WTC11 (cell line): ENCODE measurements at regions of chr2 and their contacts with region 1.

Region 1: DNA sequence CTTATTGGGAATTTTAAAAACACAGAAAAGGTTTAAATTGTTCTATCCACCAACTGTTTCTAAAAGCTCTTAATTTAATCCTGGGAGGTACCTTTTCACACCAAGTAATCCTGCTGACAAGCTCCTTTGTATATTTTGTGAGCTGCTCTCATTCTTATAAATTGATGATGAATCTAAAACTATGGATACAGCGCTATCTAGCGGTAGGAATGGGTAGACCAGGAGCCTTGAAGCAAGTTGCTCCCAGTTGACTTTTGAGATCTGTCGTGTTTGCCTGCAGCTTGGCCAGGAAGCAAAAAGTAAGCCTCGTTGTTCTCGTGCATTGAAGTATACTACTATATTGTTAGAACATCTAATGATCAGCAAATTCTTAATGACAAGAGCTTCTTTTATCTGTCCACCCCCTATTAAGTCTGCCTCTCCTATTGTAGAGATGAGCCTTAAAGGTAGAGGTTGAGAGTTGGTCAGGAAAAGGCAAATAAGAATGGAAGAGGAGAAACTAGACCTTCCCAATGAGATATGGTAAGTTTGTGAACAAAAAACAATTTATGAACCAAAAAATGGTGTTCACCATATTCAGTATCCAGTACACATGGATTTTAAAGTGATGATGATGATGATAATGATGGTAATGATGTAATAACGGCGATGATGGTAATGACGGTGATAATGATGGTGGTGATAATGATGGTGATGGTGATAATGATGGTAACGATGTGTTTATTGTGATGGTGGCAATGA is 212.0 kb upstream of the NCKAP5 start:
- DNase-seq: peak; percentile 64
- ATAC-seq: peak; percentile 74
- H3K4me3 Mint-ChIP-seq: no peak overlapping the region
- H3K27ac Mint-ChIP-seq: no peak overlapping the region
- H3K4me1 Mint-ChIP-seq: no peaks in the 10 kb centered on the region
- H3K27me3 Mint-ChIP-seq: no peaks in the 10 kb centered on the region
- CTCF ChIP-seq: peak; percentile 56

Region 2: GRCh38 chr2:133517876-133518275 is 262.4 kb before region 1 on chr2:
- CTCF ChIA-PET with region 1: interaction called, 46 read pairs
- POLR2A ChIA-PET with region 1: no interaction called
- DNase-seq: no peak
- ATAC-seq: no peak
- H3K4me3 Mint-ChIP-seq: no peak overlapping the region
- H3K27ac Mint-ChIP-seq: no peak overlapping the region
- H3K4me1 Mint-ChIP-seq: peaks cover under 1% of the 10 kb centered on the region
- H3K27me3 Mint-ChIP-seq: peaks cover 33% of the 10 kb centered on the region
- CTCF ChIP-seq: no peak

Region 3: GRCh38 chr2:133568172-133568571 is 212.1 kb before region 1 on chr2 and contains the start of gene NCKAP5:
- CTCF ChIA-PET with region 1: interaction called, 12 read pairs
- POLR2A ChIA-PET with region 1: no interaction called
- DNase-seq: no peak
- ATAC-seq: no peak
- H3K4me3 Mint-ChIP-seq: peak within 1 kb of the TSS; percentile 27; the same call in 1 of the 2 replicates
- H3K27ac Mint-ChIP-seq: no peak within 1 kb of the TSS
- H3K4me1 Mint-ChIP-seq: peaks cover 60% of the 10 kb centered on the region
- H3K27me3 Mint-ChIP-seq: no peaks in the 10 kb centered on the region
- CTCF ChIP-seq: no peak
- total RNA-seq, gene NCKAP5: 0.50 to 0.82 TPM (median 0.55 TPM) in 3 replicates

Region 4: GRCh38 chr2:133721118-133721517 is 59.2 kb before region 1 on chr2:
- CTCF ChIA-PET with region 1: no interaction called
- POLR2A ChIA-PET with region 1: no interaction called
- DNase-seq: no peak
- ATAC-seq: no peak
- H3K4me3 Mint-ChIP-seq: no peak overlapping the region
- H3K27ac Mint-ChIP-seq: no peak overlapping the region
- H3K4me1 Mint-ChIP-seq: no peaks in the 10 kb centered on the region
- H3K27me3 Mint-ChIP-seq: peaks cover 2% of the 10 kb centered on the region; the same call in 1 of the 2 replicates
- CTCF ChIP-seq: no peak

Region 5: DNA sequence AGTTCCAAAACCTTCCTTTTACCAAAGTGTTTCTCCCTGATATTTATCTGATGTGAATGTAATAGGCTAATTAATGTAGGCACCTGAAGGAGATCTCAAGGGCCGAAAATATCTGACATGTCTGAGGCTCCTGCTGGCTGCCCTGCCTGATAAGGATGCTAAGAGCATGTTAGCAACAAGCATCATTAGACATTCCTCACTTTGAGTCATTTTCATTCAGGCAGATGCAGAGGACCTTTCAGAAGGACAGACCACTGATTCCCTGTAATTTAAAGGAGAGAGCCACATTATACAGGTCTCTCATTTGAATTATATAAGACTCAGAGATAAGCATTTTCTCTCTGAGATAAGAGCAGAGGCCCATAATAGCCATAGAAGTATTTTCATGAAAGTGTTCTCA is 10.4 kb after region 1 on chr2:
- CTCF ChIA-PET with region 1: interaction called, 10 read pairs
- POLR2A ChIA-PET with region 1: no interaction called
- DNase-seq: no peak
- ATAC-seq: no peak
- H3K4me3 Mint-ChIP-seq: no peak overlapping the region
- H3K27ac Mint-ChIP-seq: no peak overlapping the region
- H3K4me1 Mint-ChIP-seq: peaks cover 7% of the 10 kb centered on the region
- H3K27me3 Mint-ChIP-seq: no peaks in the 10 kb centered on the region
- CTCF ChIP-seq: no peak

Region 6: DNA sequence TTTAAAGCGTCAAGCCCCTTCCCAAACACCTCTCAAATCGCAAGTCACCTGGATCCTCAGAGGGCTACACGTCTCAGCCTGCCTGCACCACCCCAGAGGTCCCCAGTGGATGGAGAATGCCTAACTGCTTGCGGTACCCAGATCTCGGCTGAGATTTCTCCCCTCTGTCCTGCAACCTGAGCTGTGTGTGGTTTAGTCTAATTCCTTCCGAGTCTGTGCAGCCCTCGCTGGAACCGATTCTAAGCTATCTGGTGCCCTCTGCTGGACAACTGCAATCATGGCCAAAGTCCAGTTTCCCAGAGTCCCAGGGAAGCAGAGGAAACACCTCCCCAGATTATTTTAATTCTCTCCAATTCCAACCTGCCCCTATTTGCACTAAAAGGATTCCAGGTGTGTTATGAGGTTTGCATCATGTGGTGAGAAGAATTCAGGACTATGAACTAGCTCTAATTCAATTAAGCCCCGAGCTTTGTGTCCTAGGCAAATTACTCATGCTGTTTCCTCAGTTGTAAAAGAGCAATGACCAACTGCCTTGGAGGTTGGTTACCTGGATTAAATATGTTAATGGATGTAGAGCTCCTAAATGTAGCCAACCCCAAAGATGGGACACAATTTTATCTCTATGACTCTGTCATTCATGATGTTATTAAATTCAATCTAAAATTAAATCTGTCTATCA is 64.1 kb after region 1 on chr2:
- CTCF ChIA-PET with region 1: interaction called, 18 read pairs
- POLR2A ChIA-PET with region 1: no interaction called
- DNase-seq: peak; percentile 72
- ATAC-seq: peak; percentile 95
- H3K4me3 Mint-ChIP-seq: no peak overlapping the region
- H3K27ac Mint-ChIP-seq: no peak overlapping the region
- H3K4me1 Mint-ChIP-seq: peaks cover 8% of the 10 kb centered on the region
- H3K27me3 Mint-ChIP-seq: no peaks in the 10 kb centered on the region; the same call in 1 of the 2 replicates
- CTCF ChIP-seq: peak; percentile 67